A673 (cell line): ENCODE measurements at regions of chr6 and their contacts with region 1.

Region 1: GRCh38 chr6:80457439-80457933 is 351.0 kb downstream of the BCKDHB start:
- DNase-seq: peak; percentile 41
- H3K4me3 ChIP-seq: no peak overlapping the region
- H3K27ac ChIP-seq: no peak overlapping the region
- H3K4me1 ChIP-seq: no peaks in the 10 kb centered on the region
- H3K27me3 ChIP-seq: no peaks in the 10 kb centered on the region
- CTCF ChIP-seq: no peak

Region 2: GRCh38 chr6:80440496-80441115 is 16.9 kb before region 1 on chr6:
- CTCF ChIA-PET with region 1: no interaction called
- POLR2A ChIA-PET with region 1: no interaction called
- intact Hi-C with region 1: loop called (anchors 1 kb)
- DNase-seq: no peak
- H3K4me3 ChIP-seq: no peak overlapping the region
- H3K27ac ChIP-seq: no peak overlapping the region
- H3K4me1 ChIP-seq: no peaks in the 10 kb centered on the region
- H3K27me3 ChIP-seq: no peaks in the 10 kb centered on the region
- CTCF ChIP-seq: no peak

Region 3: DNA sequence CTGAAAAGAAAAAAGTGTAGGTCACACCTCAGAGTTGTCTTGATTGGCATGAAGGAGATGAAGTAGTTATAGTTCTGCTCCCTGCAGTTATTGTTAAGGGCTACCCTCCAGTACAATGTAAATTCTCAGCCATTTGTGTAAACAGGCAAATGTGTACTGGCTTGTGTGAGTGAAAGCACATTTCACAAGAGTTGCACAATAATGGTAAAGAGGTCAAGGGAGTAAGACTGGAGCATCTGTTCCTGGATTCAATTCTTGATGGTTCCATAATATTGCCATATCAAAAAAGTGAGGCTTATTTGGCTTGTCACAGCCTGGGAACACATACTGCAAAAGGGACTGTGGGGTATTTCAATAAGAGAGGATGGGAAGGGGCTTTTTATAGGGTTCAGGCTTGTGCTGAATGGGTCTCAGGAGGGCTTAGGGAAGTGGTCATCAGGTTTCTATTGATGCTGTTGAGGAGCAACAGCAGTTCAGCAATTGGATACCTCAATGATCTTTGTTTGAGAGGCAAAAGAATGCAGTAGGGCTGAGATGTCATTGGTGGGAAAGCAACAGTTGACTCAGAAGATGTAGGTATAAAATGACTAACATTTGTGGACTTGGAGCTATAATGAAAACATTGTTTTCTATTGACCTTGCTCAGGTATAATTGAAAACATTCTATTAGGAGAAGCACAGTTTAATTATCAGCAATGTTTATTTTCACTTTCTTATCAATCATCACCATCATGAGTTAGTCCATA is 51.6 kb after region 1 on chr6:
- CTCF ChIA-PET with region 1: no interaction called
- POLR2A ChIA-PET with region 1: no interaction called
- intact Hi-C with region 1: no loop called
- DNase-seq: no peak
- H3K4me3 ChIP-seq: no peak overlapping the region
- H3K27ac ChIP-seq: no peak overlapping the region
- H3K4me1 ChIP-seq: no peaks in the 10 kb centered on the region
- H3K27me3 ChIP-seq: no peaks in the 10 kb centered on the region
- CTCF ChIP-seq: no peak